Sigmoid colon (tissue), 7 donors: ENCODE measurements at regions of chr12 and their contacts with region 1.

Region 1: GRCh38 chr12:104790296-104791125 is 167.6 kb downstream of the SLC41A2 start:
- DNase-seq: peak; percentile 67
- H3K4me3 ChIP-seq: no peak overlapping the region
- H3K27ac ChIP-seq: no peak overlapping the region
- H3K4me1 ChIP-seq: peaks cover 0 to 18% (median 11%) of the 10 kb centered on the region in 4 donors
- H3K27me3 ChIP-seq: no peaks in the 10 kb centered on the region
- CTCF ChIP-seq: peak in 3 of 4 experiments; percentile 29 to 62 (median 42)
- EP300 ChIP-seq: no peak
- POLR2A ChIP-seq: no peak

Region 2: GRCh38 chr12:104596134-104596799 is 194.2 kb before region 1 on chr12:
- intact Hi-C with region 1: loop called (anchors 10 kb)
- DNase-seq: peak; percentile 85
- H3K4me3 ChIP-seq: no peak overlapping the region
- H3K27ac ChIP-seq: peak overlapping the region in 3 of 4 donors; percentile 3 to 56 (median 45)
- H3K4me1 ChIP-seq: peaks cover 0 to 17% (median 12%) of the 10 kb centered on the region in 4 donors
- H3K27me3 ChIP-seq: no peaks in the 10 kb centered on the region
- CTCF ChIP-seq: no peak
- EP300 ChIP-seq: peak in 1 of 4 donors; percentile 5
- POLR2A ChIP-seq: no peak

Region 3: GRCh38 chr12:104710940-104711689 is 79.4 kb before region 1 on chr12:
- intact Hi-C with region 1: loop called (anchors 10 kb)
- DNase-seq: no peak
- H3K4me3 ChIP-seq: no peak overlapping the region
- H3K27ac ChIP-seq: peak overlapping the region; percentile 9 to 55 (median 46)
- H3K4me1 ChIP-seq: peaks cover 0 to 34% (median 27%) of the 10 kb centered on the region in 4 donors
- H3K27me3 ChIP-seq: no peaks in the 10 kb centered on the region
- CTCF ChIP-seq: no peak
- EP300 ChIP-seq: no peak
- POLR2A ChIP-seq: no peak

Region 4: DNA sequence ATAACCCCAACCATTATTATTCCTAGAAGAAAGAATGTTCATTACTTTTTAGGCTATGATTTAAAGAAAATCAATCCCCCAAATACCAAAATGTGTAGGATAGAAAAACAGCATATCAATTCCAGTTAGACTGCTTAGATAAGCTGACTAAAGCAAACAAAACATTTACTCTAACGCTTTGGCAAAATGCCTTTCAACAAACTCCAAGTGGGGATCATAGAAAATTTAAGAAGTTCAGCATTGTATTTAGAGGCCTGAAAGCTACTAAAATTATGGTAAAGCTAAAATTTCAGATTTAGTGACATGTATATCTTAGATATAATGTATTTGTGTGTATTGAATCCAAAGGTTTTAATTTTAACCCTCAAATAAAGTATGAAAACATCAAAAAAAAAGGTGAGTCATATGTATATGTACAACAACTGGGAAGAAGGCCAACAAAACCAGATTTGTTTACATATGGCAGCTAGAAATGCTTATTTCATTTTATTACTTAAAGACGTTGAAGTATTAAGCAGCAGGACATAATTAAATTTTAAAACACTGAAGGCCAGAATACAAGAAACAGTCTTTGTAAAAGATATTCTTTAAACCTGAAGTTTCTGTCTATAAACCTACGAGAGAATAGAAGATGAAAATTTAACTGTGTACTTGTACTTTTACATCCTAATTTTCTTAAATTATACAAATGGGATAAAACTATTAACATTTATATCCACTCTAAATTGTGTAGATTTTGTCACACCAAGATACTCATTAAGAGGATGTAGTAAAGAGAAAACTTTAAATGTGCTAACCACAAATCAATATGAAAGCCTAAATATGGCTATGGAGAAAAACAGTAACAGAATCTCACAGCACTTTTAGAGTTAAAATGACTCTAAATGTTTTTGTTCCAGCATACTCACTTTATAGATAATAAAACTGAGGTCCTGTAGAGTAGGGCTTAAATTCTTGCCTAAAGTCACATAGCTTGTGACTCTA is 96.2 kb after region 1 on chr12:
- intact Hi-C with region 1: no loop called
- DNase-seq: no peak
- H3K4me3 ChIP-seq: no peak overlapping the region
- H3K27ac ChIP-seq: no peak overlapping the region
- H3K4me1 ChIP-seq: no peaks in the 10 kb centered on the region
- H3K27me3 ChIP-seq: no peaks in the 10 kb centered on the region
- CTCF ChIP-seq: no peak
- EP300 ChIP-seq: no peak
- POLR2A ChIP-seq: no peak